ENCODE measurements at regions of chr12 and their contacts with region 1.

Region 1: DNA sequence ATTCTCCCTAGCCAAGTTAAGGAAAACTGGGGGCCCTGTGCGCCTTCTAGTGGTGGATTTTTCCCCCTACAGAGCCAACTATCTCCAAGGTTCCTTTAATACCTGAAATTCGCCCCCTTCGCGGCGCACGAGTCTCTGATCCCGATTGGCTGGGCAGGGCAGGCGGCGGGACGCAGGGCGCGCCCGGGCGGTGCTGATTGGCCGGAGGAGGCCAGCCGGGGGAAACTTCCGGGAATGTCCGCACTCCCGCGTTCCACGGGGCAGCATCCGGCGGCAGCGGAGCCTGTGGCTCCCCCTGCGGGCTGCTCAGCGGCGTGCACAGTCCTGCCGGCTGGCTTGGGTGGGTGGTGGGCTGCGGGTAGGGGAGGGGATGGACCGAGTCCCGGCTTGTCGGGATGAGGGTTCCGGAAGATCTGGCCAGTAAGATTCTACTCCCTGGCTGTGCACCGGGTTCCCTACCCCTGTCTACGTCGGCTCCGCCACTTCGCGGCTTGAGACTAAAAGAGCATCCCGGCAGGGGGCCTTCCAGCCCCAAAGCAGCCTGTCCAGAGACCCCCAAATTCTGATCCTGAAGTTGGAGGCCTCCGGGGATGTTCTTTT is at the start of gene NABP2:
- DNase-seq: peak; percentile 99
- ATAC-seq: peak; percentile 93
- H3K4me3 ChIP-seq: peak within 1 kb of the TSS; percentile 43 to 50
- H3K27ac ChIP-seq: peak within 1 kb of the TSS; percentile 8 to 87
- H3K4me1 ChIP-seq: no peaks in the 10 kb centered on the region
- H3K27me3 ChIP-seq: no peaks in the 10 kb centered on the region
- total RNA-seq, gene NABP2: 18.6 to 19.7 TPM

Region 2: GRCh38 chr12:56117778-56118687 is 106.2 kb before region 1 on chr12 and contains the start of gene ZC3H10:
- intact Hi-C with region 1: loop called in 1 of 2 experiments (anchors 2 kb)
- DNase-seq: peak; percentile 98 to 99
- ATAC-seq: peak; percentile 92
- H3K4me3 ChIP-seq: peak within 1 kb of the TSS; percentile 93 to 99
- H3K27ac ChIP-seq: peak within 1 kb of the TSS; percentile 91 to 98
- H3K4me1 ChIP-seq: peaks cover 0 to 6% of the 10 kb centered on the region in 2 donors
- H3K27me3 ChIP-seq: peaks cover 0 to 3% of the 10 kb centered on the region in 2 donors
- total RNA-seq, gene ZC3H10: 8.9 to 9.6 TPM

Region 3: GRCh38 chr12:56206457-56207166 is 17.6 kb before region 1 on chr12:
- intact Hi-C with region 1: loop called in 1 of 2 experiments (anchors 2 kb)
- DNase-seq: peak in 1 of 2 donors; percentile 69
- ATAC-seq: peak; percentile 68
- H3K4me3 ChIP-seq: no peak overlapping the region
- H3K27ac ChIP-seq: no peak overlapping the region
- H3K4me1 ChIP-seq: no peaks in the 10 kb centered on the region
- H3K27me3 ChIP-seq: no peaks in the 10 kb centered on the region

Region 4: GRCh38 chr12:56258057-56258819 is 34.0 kb after region 1 on chr12 and contains the start of gene ANKRD52:
- intact Hi-C with region 1: loop called in 1 of 2 experiments (anchors 5 kb)
- DNase-seq: peak; percentile 86 to 92
- ATAC-seq: peak; percentile 94
- H3K4me3 ChIP-seq: peak within 1 kb of the TSS; percentile 99 to 100
- H3K27ac ChIP-seq: peak within 1 kb of the TSS in 1 of 2 donors; percentile 72
- H3K4me1 ChIP-seq: peaks cover 0 to 3% of the 10 kb centered on the region in 2 donors
- H3K27me3 ChIP-seq: no peaks in the 10 kb centered on the region
- total RNA-seq, gene ANKRD52: 30.5 to 37.9 TPM

Region 5: GRCh38 chr12:56299853-56300643 is 75.8 kb after region 1 on chr12 and contains the start of gene CS:
- intact Hi-C with region 1: loop called in 1 of 2 experiments (anchors 2 kb)
- DNase-seq: peak; percentile 99 to 100
- ATAC-seq: peak; percentile 99
- H3K4me3 ChIP-seq: peak within 1 kb of the TSS; percentile 66 to 71
- H3K27ac ChIP-seq: peak within 1 kb of the TSS; percentile 62 to 95
- H3K4me1 ChIP-seq: peaks cover 0 to 2% of the 10 kb centered on the region in 2 donors
- H3K27me3 ChIP-seq: no peaks in the 10 kb centered on the region
- total RNA-seq, gene CS: 103 to 104 TPM